ENCODE measurements at regions of chr3 and their contacts with region 1.

Region 1: DNA sequence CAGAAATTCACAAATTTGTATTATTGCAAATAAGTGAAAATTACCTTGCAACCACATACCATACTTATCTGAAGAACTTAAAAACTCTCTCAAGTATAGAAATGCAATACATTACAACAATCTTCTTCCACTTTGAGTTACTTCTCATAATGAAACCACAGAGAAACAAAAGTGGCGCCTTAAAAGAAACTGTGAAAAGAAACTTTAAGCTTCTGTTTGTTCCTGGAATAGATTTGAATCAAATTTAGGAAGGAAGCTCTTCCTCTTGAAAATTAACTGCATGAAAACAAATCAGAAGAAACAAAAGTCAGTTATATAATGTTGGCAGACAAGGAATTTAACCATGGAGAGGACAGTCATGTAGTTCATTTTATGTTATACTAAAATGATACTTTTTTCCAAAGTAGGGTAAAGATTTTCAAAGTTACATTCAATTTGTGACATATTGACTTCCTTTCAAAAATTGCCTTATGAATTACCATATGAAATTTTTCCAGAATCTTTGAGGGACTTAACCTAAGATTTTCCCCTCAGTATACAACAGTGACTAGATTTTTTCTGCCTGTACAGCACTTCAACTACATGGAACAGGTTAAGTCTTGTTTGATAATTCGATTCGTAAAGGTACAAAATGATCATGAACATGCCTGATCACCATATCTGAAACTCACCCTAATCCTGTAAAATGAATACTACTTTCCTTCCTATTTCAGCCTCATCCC is 57.6 kb upstream of the TNFSF10 start:
- DNase-seq: peak; percentile 67
- H3K4me3 Mint-ChIP-seq: peak overlapping the region; percentile 74
- H3K27ac Mint-ChIP-seq: peak overlapping the region; percentile 91
- H3K4me1 Mint-ChIP-seq: peaks cover 91% of the 10 kb centered on the region
- H3K27me3 Mint-ChIP-seq: no peaks in the 10 kb centered on the region

Region 2: DNA sequence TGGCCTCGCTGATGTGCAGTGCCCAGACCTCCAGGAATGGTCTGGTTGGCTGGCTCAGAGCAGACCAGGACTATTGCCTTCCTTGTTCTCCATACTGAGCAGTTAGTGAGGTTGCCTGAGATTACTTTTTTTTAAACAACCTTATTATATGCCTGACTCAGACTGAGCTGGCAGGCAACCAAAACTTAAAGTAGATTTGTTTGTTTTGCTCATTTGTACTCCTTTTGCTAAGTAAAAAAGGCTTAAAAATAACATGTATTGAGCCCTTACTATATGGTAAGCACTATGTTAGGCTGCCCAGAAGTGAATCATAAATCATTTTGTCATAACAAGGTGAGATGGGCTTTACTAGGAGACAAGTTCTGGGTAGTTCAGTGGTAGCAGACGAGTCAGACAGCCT is 225.0 kb before region 1 on chr3:
- intact Hi-C with region 1: no loop called
- DNase-seq: no peak
- H3K4me3 Mint-ChIP-seq: no peak overlapping the region
- H3K27ac Mint-ChIP-seq: no peak overlapping the region
- H3K4me1 Mint-ChIP-seq: peaks cover 2% of the 10 kb centered on the region
- H3K27me3 Mint-ChIP-seq: no peaks in the 10 kb centered on the region

Region 3: GRCh38 chr3:172517859-172518466 is 62.9 kb before region 1 on chr3:
- intact Hi-C with region 1: loop called (anchors 1 kb)
- DNase-seq: peak; percentile 89
- H3K4me3 Mint-ChIP-seq: peak overlapping the region; percentile 87
- H3K27ac Mint-ChIP-seq: peak overlapping the region; percentile 98
- H3K4me1 Mint-ChIP-seq: peaks cover 66% of the 10 kb centered on the region
- H3K27me3 Mint-ChIP-seq: no peaks in the 10 kb centered on the region

Region 4: GRCh38 chr3:172530566-172530965 is 50.3 kb before region 1 on chr3:
- intact Hi-C with region 1: loop called (anchors 1 kb)
- DNase-seq: peak; percentile 85
- H3K4me3 Mint-ChIP-seq: peak overlapping the region; percentile 76
- H3K27ac Mint-ChIP-seq: peak overlapping the region; percentile 97
- H3K4me1 Mint-ChIP-seq: peaks cover 49% of the 10 kb centered on the region
- H3K27me3 Mint-ChIP-seq: no peaks in the 10 kb centered on the region

Region 5: GRCh38 chr3:172550347-172550943 is 30.4 kb before region 1 on chr3:
- intact Hi-C with region 1: loop called (anchors 1 kb)
- DNase-seq: peak; percentile 87
- H3K4me3 Mint-ChIP-seq: peak overlapping the region; percentile 37
- H3K27ac Mint-ChIP-seq: peak overlapping the region; percentile 82
- H3K4me1 Mint-ChIP-seq: peaks cover 58% of the 10 kb centered on the region
- H3K27me3 Mint-ChIP-seq: no peaks in the 10 kb centered on the region

Region 6: GRCh38 chr3:172616031-172616461 is 35.2 kb after region 1 on chr3:
- intact Hi-C with region 1: loop called (anchors 1 kb)
- DNase-seq: no peak
- H3K4me3 Mint-ChIP-seq: peak overlapping the region; percentile 60
- H3K27ac Mint-ChIP-seq: peak overlapping the region; percentile 83
- H3K4me1 Mint-ChIP-seq: peaks cover 20% of the 10 kb centered on the region
- H3K27me3 Mint-ChIP-seq: no peaks in the 10 kb centered on the region

Region 7: GRCh38 chr3:172987273-172987672 is 406.4 kb after region 1 on chr3:
- intact Hi-C with region 1: no loop called
- DNase-seq: no peak
- H3K4me3 Mint-ChIP-seq: no peak overlapping the region
- H3K27ac Mint-ChIP-seq: no peak overlapping the region
- H3K4me1 Mint-ChIP-seq: no peaks in the 10 kb centered on the region
- H3K27me3 Mint-ChIP-seq: no peaks in the 10 kb centered on the region

Region 8: GRCh38 chr3:173140986-173141385 is 560.1 kb after region 1 on chr3 and contains the start of gene SPATA16:
- intact Hi-C with region 1: no loop called
- DNase-seq: no peak
- H3K4me3 Mint-ChIP-seq: no peak within 1 kb of the TSS
- H3K27ac Mint-ChIP-seq: no peak within 1 kb of the TSS
- H3K4me1 Mint-ChIP-seq: no peaks in the 10 kb centered on the region
- H3K27me3 Mint-ChIP-seq: no peaks in the 10 kb centered on the region
- total RNA-seq, gene SPATA16: not detected in 2 replicates